CD14-positive monocyte (primary cell): ENCODE measurements at regions of chr4 and their contacts with region 1.

Region 1: DNA sequence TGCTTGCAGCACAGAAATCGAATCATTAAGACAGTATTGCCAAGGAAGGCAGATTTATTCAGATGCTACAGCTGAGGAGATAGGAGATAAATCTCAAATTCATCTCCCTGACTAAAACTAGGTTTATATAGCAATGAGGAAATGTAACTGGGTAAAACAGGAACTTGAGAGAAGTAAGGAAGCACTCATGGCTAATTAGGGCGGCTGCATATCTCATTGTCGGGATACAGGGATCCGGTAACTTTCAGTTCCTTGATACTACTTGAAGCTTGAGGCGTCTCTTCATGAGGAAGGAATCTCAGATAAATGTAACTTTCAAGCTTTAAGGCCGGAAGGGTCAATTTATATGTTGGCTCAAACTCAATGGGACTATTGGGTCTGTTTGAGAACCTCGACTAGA is 129.2 kb upstream of the WDR1 start:
- DNase-seq: peak; percentile 18 to 60 (median 26)
- H3K4me3 ChIP-seq: peak overlapping the region in 1 of 3 experiments; percentile 19
- H3K4me3 Mint-ChIP-seq: no peak overlapping the region
- H3K27ac ChIP-seq: no peak overlapping the region
- H3K27ac Mint-ChIP-seq: no peak overlapping the region
- H3K4me1 ChIP-seq: peaks cover 13 to 14% of the 10 kb centered on the region in 2 donors
- H3K4me1 Mint-ChIP-seq: peaks cover 14% of the 10 kb centered on the region
- H3K27me3 ChIP-seq: peaks cover 9 to 27% of the 10 kb centered on the region in 2 donors
- H3K27me3 Mint-ChIP-seq: peaks cover 5 to 11% (median 6%) of the 10 kb centered on the region in 3 donors
- CTCF ChIP-seq: no peak

Region 2: GRCh38 chr4:10140866-10141759 is 104.6 kb before region 1 on chr4:
- intact Hi-C with region 1: no loop called
- DNase-seq: no peak
- H3K4me3 ChIP-seq: no peak overlapping the region
- H3K4me3 Mint-ChIP-seq: no peak overlapping the region
- H3K27ac ChIP-seq: no peak overlapping the region
- H3K27ac Mint-ChIP-seq: no peak overlapping the region
- H3K4me1 ChIP-seq: peaks cover 0 to 3% of the 10 kb centered on the region in 2 donors
- H3K4me1 Mint-ChIP-seq: peaks cover 5% of the 10 kb centered on the region
- H3K27me3 ChIP-seq: no peaks in the 10 kb centered on the region
- H3K27me3 Mint-ChIP-seq: peaks cover 0 to 2% (median 2%) of the 10 kb centered on the region in 3 donors
- CTCF ChIP-seq: no peak

Region 3: DNA sequence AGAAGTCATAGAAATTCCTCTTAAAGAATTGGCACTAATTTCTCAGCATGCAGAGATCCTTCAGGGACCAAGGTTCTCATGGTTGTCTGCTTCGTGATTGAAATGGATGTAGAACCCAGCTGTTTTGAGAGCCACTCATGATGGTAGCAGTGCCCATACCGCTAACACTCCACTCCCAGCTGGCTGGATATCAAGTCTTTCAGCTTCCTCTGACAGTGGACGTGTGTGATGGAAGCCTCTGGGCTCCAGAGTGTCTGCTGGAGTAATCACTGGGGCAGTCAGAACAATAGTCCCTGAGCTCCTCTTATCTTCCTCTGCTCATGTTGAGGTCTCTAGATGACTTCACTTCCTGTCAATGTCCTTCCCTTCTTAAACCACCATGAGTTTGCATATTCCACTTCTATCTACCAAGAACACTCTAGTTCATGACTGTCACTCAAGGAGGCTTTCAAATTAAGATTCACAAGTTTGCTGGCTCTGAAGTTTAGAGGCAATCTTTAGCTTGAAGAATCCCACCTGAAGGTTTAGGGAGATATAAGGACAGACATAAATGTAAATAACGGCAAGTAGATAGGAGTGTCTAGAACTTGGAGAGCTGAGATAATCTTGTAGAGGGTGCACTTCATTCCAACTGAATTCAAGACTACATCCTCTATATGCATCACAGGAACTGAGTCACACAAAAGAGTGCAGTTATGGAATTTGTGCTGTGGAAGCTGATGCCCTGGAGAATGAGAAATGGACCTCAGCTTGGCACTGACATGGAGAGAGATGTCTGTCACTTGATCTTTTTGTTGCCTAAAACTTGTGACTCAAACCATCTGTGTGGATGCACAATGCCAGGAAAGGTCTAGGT is 64.6 kb before region 1 on chr4:
- intact Hi-C with region 1: loop called in 1 of 2 experiments (anchors 5 kb)
- DNase-seq: peak; percentile 74 to 89 (median 80)
- H3K4me3 ChIP-seq: peak overlapping the region in 1 of 3 experiments; percentile 32
- H3K4me3 Mint-ChIP-seq: peak overlapping the region; percentile 20 to 83
- H3K27ac ChIP-seq: peak overlapping the region; percentile 70 to 86
- H3K27ac Mint-ChIP-seq: peak overlapping the region; percentile 86 to 97 (median 95)
- H3K4me1 ChIP-seq: peaks cover 49% of the 10 kb centered on the region in 2 donors
- H3K4me1 Mint-ChIP-seq: peaks cover 56% of the 10 kb centered on the region
- H3K27me3 ChIP-seq: no peaks in the 10 kb centered on the region
- H3K27me3 Mint-ChIP-seq: peaks cover 0 to 6% (median 4%) of the 10 kb centered on the region in 3 donors
- CTCF ChIP-seq: no peak

Region 4: DNA sequence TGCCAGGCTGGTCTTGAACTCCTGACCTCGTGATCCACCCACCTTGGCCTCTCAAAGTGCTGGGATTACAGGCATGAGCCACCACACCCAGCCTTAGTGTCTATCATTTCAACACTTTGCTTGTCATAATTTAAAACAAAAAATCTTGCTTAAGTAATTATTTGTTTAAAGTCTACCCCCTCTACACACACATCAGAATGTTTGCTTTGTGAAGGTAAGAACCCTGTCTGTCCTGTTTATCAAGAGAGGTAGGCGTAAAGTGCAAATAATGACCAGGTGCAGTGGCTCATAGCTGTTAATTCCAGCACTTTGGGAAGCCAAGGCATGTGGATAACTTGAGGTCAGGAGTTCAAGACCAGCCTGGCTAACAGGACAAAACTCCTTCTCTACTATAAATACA is 765.5 kb after region 1 on chr4:
- intact Hi-C with region 1: no loop called
- DNase-seq: no peak
- H3K4me3 ChIP-seq: no peak overlapping the region
- H3K4me3 Mint-ChIP-seq: no peak overlapping the region
- H3K27ac ChIP-seq: no peak overlapping the region
- H3K27ac Mint-ChIP-seq: no peak overlapping the region
- H3K4me1 ChIP-seq: no peaks in the 10 kb centered on the region
- H3K4me1 Mint-ChIP-seq: no peaks in the 10 kb centered on the region
- H3K27me3 ChIP-seq: no peaks in the 10 kb centered on the region
- H3K27me3 Mint-ChIP-seq: peaks cover 0 to 2% (median 0%) of the 10 kb centered on the region in 3 donors
- CTCF ChIP-seq: no peak